GM12878 (cell line): ENCODE measurements at regions of chr10 and their contacts with region 1.

Region 1: GRCh38 chr10:29618341-29619171 is 16.2 kb downstream of the SVIL start:
- DNase-seq: no peak
- ATAC-seq: peak; percentile 36
- H3K4me3 ChIP-seq: no peak overlapping the region
- H3K27ac ChIP-seq: no peak overlapping the region
- H3K4me1 ChIP-seq: no peaks in the 10 kb centered on the region
- H3K27me3 ChIP-seq: no peaks in the 10 kb centered on the region
- CTCF ChIP-seq: no peak
- EP300 ChIP-seq: no peak
- POLR2A ChIP-seq: no peak
- RAD21 ChIP-seq: no peak

Region 2: DNA sequence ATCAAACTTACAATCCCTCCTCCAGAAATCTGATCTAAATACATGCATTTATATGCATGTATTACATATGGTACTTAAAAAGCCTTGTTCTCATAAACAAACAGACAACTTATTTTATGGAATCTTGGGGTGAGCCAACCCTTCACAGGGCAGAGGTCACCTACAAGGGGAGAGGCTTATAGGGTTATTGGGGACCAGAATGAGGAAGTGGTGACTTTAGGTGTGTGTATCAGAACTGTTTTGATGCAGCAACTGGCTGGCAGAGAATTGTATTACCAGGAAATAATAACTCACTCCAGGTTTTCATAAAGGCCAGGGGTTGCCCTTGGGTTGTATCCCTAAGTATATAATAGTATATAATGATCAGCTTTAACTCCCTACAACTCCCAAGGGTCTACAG is 74.8 kb before region 1 on chr10:
- CTCF ChIA-PET with region 1: no interaction called
- POLR2A ChIA-PET with region 1: no interaction called
- RAD21 ChIA-PET with region 1: no interaction called
- SMC1A ChIA-PET with region 1: no interaction called
- in situ Hi-C with region 1: no loop called
- intact Hi-C with region 1: no loop called
- DNase-seq: no peak
- ATAC-seq: peak; percentile 82
- H3K4me3 ChIP-seq: no peak overlapping the region
- H3K27ac ChIP-seq: no peak overlapping the region
- H3K4me1 ChIP-seq: no peaks in the 10 kb centered on the region
- H3K27me3 ChIP-seq: no peaks in the 10 kb centered on the region
- CTCF ChIP-seq: no peak
- EP300 ChIP-seq: no peak
- POLR2A ChIP-seq: no peak
- RAD21 ChIP-seq: no peak

Region 3: DNA sequence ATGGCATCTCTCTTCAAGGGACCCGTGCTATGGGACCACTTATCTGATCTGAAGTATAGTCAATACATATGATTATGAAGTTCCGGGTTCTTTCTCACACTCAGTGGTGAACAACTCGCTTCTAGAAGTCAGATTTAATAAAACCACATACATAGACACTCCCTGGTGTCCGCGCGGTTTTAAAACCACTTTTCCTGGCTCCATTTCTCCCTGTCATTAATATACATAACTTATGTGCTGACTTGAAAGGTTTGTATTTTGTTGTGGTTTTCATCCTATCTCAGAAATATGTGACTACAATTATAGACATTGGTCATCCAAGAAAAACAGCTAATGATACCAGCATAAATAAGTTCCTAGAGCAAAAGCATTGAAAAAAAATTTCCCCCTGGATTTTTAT is 17.7 kb before region 1 on chr10:
- CTCF ChIA-PET with region 1: interaction called, 4 read pairs
- POLR2A ChIA-PET with region 1: no interaction called
- RAD21 ChIA-PET with region 1: no interaction called
- SMC1A ChIA-PET with region 1: interaction called, 10 read pairs
- in situ Hi-C with region 1: no loop called
- intact Hi-C with region 1: no loop called
- DNase-seq: no peak
- ATAC-seq: no peak
- H3K4me3 ChIP-seq: no peak overlapping the region
- H3K27ac ChIP-seq: no peak overlapping the region
- H3K4me1 ChIP-seq: no peaks in the 10 kb centered on the region
- H3K27me3 ChIP-seq: no peaks in the 10 kb centered on the region
- CTCF ChIP-seq: no peak
- EP300 ChIP-seq: no peak
- POLR2A ChIP-seq: no peak
- RAD21 ChIP-seq: no peak

Region 4: GRCh38 chr10:29881336-29881771 is 262.8 kb after region 1 on chr10:
- CTCF ChIA-PET with region 1: no interaction called
- POLR2A ChIA-PET with region 1: no interaction called
- RAD21 ChIA-PET with region 1: no interaction called
- SMC1A ChIA-PET with region 1: no interaction called
- in situ Hi-C with region 1: no loop called
- intact Hi-C with region 1: no loop called
- DNase-seq: no peak
- ATAC-seq: no peak
- H3K4me3 ChIP-seq: no peak overlapping the region
- H3K27ac ChIP-seq: no peak overlapping the region
- H3K4me1 ChIP-seq: no peaks in the 10 kb centered on the region
- H3K27me3 ChIP-seq: peaks cover 3 to 6% of the 10 kb centered on the region in 2 experiments; a peak in 1 of 4 replicates
- CTCF ChIP-seq: no peak
- EP300 ChIP-seq: no peak
- POLR2A ChIP-seq: no peak
- RAD21 ChIP-seq: no peak